GM10248 (cell line): ENCODE measurements at regions of chr14 and their contacts with region 1.

Region 1: DNA sequence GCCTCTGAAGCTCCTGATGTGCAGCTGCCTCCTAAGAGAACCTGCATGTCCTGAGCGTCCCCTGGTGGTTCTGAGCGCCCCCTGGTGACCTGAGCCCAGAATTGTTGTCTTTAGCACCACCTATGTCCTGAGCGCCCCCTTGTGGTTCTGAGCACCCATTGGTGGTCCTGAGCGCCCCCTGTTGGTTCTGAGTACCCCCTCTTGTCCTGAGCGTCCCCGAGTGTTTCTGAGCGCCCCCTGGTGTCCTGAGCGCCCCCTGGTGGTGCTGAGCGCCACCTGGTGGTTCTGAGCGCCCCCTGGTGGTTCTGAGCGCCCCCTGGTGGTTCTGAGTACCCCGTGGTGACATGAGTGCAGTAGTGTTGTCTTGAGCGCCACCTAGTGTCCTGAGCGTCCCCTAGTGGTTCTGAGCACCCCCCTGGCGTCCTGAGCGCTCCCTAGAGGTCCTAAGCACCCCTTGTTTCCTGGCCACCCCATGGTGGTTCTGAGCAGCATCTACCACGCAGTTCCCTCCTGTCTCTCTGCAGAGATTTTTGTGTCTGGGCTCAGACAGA is 782.5 kb downstream of the TMEM121 start:
- DNase-seq: peak; percentile 70
- CTCF ChIP-seq: peak; percentile 84

Region 2: DNA sequence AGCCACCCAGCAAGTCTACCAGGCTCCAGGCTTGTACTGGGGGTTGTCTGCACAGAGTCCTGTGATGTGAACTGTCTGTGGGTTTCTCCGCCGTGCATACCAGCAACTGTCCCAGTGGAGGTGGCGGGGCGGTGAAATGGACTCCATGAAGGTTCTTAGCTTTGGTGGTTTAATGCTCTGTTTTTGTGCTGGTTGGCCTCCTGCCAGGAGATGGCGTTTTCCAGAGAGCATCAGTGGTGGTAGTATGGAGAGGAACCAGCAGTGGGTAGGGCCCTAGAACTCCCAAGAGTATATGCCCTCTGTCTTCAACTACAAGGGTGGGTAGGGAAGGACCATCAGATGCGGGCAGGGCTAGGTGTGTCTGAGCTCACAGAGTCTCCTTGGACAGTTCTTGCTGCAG is 478.7 kb before region 1 on chr14:
- CTCF ChIA-PET with region 1: no interaction called
- POLR2A ChIA-PET with region 1: no interaction called
- DNase-seq: no peak
- CTCF ChIP-seq: no peak

Region 3: DNA sequence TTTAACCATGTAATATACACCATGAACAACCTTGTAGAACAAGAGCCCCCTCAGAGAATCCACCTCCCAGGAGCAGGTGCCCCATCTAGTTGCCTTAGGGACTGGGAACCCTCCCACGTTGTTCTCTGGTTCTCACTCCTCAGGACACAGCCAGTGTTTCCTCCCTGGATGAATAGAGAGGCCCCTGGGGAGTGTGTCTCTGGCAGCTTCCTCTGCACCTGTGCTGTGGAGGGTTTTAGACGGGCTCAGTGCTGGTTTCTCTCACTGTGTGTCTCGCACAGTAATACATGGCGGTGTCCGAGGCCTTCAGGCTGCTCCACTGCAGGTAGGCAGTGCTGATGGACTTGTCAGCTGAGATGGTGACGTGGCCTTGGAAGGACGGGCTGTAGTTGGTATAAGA is 201.2 kb before region 1 on chr14:
- CTCF ChIA-PET with region 1: no interaction called
- POLR2A ChIA-PET with region 1: no interaction called
- DNase-seq: no peak
- CTCF ChIP-seq: no peak

Region 4: DNA sequence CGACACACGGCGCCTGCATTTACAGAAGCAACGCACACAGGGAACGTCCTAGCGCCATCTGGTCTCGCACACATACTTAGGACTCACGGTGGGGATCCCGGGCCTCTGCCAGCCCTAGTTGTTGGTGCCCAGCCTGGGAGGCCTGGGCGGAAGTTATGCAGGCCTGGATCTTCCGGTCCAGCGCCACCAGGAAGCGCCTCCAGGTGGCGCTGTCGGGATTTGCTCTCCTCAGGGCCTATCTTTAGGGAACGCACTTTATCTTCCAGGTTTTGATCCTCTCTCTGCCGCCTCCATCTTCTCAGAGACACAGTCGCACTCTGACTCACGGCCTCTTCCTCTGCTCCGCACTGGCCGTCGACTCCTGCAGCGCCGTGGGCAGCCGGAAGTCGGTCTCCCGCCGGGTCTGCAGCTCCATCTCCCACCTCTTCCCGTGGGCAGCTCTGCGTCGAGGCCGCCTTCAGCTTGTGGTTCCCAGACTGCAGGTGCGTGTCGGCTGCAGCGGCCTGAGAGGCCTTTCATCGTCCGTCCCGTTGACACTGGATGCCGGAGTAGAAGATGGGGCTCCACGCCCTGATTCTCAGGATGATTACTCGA is 22.1 kb before region 1 on chr14:
- CTCF ChIA-PET with region 1: interaction called, 12 read pairs
- POLR2A ChIA-PET with region 1: no interaction called
- DNase-seq: peak; percentile 38
- CTCF ChIP-seq: peak; percentile 33

Region 5: DNA sequence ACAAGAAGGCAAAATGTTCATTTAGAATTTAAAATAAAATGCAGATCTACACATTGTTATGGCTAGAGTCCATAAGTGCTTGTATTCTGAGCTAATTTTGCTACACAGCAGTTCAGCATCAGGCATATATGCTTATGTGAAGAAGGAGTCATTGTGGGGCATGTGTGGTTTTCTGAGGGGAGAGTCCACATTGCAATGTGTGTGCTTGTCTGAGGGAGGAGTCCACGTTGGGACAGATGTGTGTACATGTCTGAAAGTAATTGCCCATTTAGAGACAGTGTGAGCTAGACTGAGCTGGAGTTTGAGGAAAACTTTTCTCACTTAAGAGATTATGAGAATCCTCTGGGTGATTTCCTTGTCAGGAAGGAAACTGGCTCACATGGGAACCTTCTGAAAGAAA is 14.6 kb before region 1 on chr14:
- CTCF ChIA-PET with region 1: interaction called, 13 read pairs
- POLR2A ChIA-PET with region 1: no interaction called
- DNase-seq: no peak
- CTCF ChIP-seq: no peak

Region 6: DNA sequence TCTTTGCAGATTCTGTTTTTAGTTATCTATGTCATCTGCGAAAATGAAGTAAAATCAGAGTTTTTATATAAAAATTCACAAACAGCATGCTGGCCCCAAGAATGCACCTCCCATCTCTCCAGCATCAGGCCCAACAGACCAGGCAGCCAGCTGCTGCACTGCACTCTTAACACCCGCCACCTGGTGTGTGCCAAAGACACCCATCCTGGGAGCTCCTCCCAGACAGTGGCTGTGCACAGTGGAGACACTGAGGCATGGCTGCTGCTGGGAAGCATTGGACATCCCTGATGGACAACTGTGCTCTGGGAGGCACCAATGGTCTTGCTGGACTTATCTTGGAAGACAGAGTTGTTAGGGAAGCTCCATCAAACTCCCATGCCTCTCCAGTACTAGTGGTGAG is 34.7 kb after region 1 on chr14:
- CTCF ChIA-PET with region 1: interaction called, 65 read pairs
- POLR2A ChIA-PET with region 1: no interaction called
- DNase-seq: no peak
- CTCF ChIP-seq: no peak